Breast epithelium (tissue), 4 donors: ENCODE measurements at regions of chr9 and their contacts with region 1.

Region 1: GRCh38 chr9:100058699-100059579 is 39.9 kb downstream of the ERP44 start:
- DNase-seq: no peak
- H3K4me3 ChIP-seq: no peak overlapping the region
- H3K27ac ChIP-seq: no peak overlapping the region
- H3K4me1 ChIP-seq: no peaks in the 10 kb centered on the region
- H3K27me3 ChIP-seq: no peaks in the 10 kb centered on the region
- CTCF ChIP-seq: no peak
- POLR2A ChIP-seq: no peak

Region 2: GRCh38 chr9:98533132-98533531 is 1525.8 kb before region 1 on chr9:
- intact Hi-C with region 1: loop called (anchors 5 kb)
- DNase-seq: no peak
- H3K4me3 ChIP-seq: no peak overlapping the region
- H3K27ac ChIP-seq: no peak overlapping the region
- H3K4me1 ChIP-seq: no peaks in the 10 kb centered on the region
- H3K27me3 ChIP-seq: peaks cover 0 to 3% of the 10 kb centered on the region in 2 donors
- CTCF ChIP-seq: no peak
- POLR2A ChIP-seq: no peak

Region 3: GRCh38 chr9:100098887-100099721 is 40.2 kb after region 1 on chr9 and contains the starts of genes ERP44 and INVS:
- intact Hi-C with region 1: no loop called
- DNase-seq: peak; percentile 96 to 99
- H3K4me3 ChIP-seq: peak within 1 kb of the TSS; percentile 87 to 90 (median 89)
- H3K27ac ChIP-seq: peak within 1 kb of the TSS; percentile 91 to 92
- H3K4me1 ChIP-seq: peaks cover 3 to 30% of the 10 kb centered on the region in 2 donors
- H3K27me3 ChIP-seq: no peaks in the 10 kb centered on the region
- CTCF ChIP-seq: no peak
- POLR2A ChIP-seq: peak; percentile 51
- total RNA-seq, gene ERP44: 15.7 to 17.8 (median 17.7) TPM
- total RNA-seq, gene INVS: 30.7 to 36.0 (median 34.7) TPM